Sigmoid colon (tissue), 7 donors: ENCODE measurements at regions of chr16 and their contacts with region 1.

Region 1: GRCh38 chr16:87492721-87493607 is at the start of gene ZCCHC14:
- DNase-seq: peak; percentile 99
- H3K4me3 ChIP-seq: peak within 1 kb of the TSS; percentile 36 to 64 (median 58)
- H3K27ac ChIP-seq: peak within 1 kb of the TSS; percentile 67 to 87 (median 77)
- H3K4me1 ChIP-seq: peaks cover 2 to 41% (median 37%) of the 10 kb centered on the region in 4 donors
- H3K27me3 ChIP-seq: no peaks in the 10 kb centered on the region
- CTCF ChIP-seq: no peak
- EP300 ChIP-seq: no peak
- POLR2A ChIP-seq: no peak
- total RNA-seq, gene ZCCHC14: 11.4 to 23.8 (median 15.2) TPM

Region 2: GRCh38 chr16:87316923-87317749 is 175.8 kb before region 1 on chr16 and contains the start of gene C16orf95:
- intact Hi-C with region 1: loop called (anchors 5 kb)
- DNase-seq: peak; percentile 98
- H3K4me3 ChIP-seq: peak within 1 kb of the TSS; percentile 64 to 99 (median 90)
- H3K27ac ChIP-seq: peak within 1 kb of the TSS; percentile 92 to 98 (median 96)
- H3K4me1 ChIP-seq: peaks cover 0 to 12% (median 9%) of the 10 kb centered on the region in 4 donors
- H3K27me3 ChIP-seq: no peaks in the 10 kb centered on the region
- CTCF ChIP-seq: peak; percentile 56 to 70 (median 61)
- EP300 ChIP-seq: no peak
- POLR2A ChIP-seq: peak; percentile 96 to 97
- total RNA-seq, gene C16orf95: 0.36 to 1.9 (median 1.2) TPM in 3 of 4 donors, not detected in the other

Region 3: GRCh38 chr16:87387942-87388817 is 104.8 kb before region 1 on chr16:
- intact Hi-C with region 1: loop called (anchors 5 kb)
- DNase-seq: peak; percentile 98
- H3K4me3 ChIP-seq: peak overlapping the region in 2 of 4 donors; percentile 13 to 18
- H3K27ac ChIP-seq: peak overlapping the region; percentile 88 to 100 (median 95)
- H3K4me1 ChIP-seq: peaks cover 0 to 44% (median 36%) of the 10 kb centered on the region in 4 donors
- H3K27me3 ChIP-seq: no peaks in the 10 kb centered on the region
- CTCF ChIP-seq: no peak
- EP300 ChIP-seq: peak in 3 of 4 donors; percentile 65 to 81 (median 69)
- POLR2A ChIP-seq: peak; percentile 9 to 44

Region 4: DNA sequence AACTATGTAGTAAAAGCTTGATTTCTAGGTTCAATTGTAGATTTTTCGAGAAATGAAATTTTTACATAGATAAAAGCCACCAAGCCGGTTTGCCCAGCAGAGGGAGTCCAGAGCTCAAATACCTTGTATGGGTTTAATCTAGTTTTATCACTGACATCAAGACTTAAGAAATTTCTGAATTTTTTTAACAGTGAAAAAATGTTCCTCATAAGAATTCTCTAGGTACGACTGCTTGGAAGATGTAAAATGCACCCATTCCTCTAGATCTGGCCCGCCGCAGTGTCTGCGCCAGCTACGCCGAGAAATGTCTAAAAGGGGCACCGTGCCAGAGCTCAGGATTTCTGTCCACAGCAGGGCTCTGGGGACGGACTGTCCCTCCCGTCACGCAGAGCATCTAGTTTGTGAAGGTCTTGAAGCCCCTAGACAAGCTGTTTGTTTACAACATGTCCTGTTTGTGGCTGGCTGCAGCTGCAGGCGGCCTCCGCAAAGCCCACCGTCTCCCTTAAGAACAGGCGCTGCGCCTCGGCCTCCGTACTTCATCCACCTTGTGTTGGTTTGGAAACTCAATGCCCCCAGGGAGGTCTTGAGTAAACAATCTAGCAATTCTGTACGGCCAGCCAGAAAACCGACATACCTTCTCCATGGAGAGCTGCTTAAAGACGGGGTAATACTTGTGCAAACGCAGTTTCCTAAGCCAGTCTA is 76.0 kb before region 1 on chr16:
- intact Hi-C with region 1: loop called (anchors 5 kb)
- DNase-seq: peak; percentile 69
- H3K4me3 ChIP-seq: no peak overlapping the region
- H3K27ac ChIP-seq: no peak overlapping the region
- H3K4me1 ChIP-seq: no peaks in the 10 kb centered on the region
- H3K27me3 ChIP-seq: no peaks in the 10 kb centered on the region
- CTCF ChIP-seq: peak; percentile 10 to 54 (median 40)
- EP300 ChIP-seq: no peak
- POLR2A ChIP-seq: no peak

Region 5: GRCh38 chr16:87447323-87447722 is 45.6 kb before region 1 on chr16:
- intact Hi-C with region 1: loop called (anchors 5 kb)
- DNase-seq: no peak
- H3K4me3 ChIP-seq: no peak overlapping the region
- H3K27ac ChIP-seq: peak overlapping the region; percentile 58 to 82 (median 76)
- H3K4me1 ChIP-seq: peaks cover 0 to 18% (median 14%) of the 10 kb centered on the region in 4 donors
- H3K27me3 ChIP-seq: no peaks in the 10 kb centered on the region
- CTCF ChIP-seq: no peak
- EP300 ChIP-seq: no peak
- POLR2A ChIP-seq: no peak

Region 6: GRCh38 chr16:87461466-87461991 is 31.4 kb before region 1 on chr16:
- intact Hi-C with region 1: loop called (anchors 2 kb)
- DNase-seq: peak; percentile 81
- H3K4me3 ChIP-seq: no peak overlapping the region
- H3K27ac ChIP-seq: peak overlapping the region in 3 of 4 donors; percentile 25 to 43 (median 30)
- H3K4me1 ChIP-seq: peaks cover 0 to 63% (median 55%) of the 10 kb centered on the region in 4 donors
- H3K27me3 ChIP-seq: no peaks in the 10 kb centered on the region
- CTCF ChIP-seq: peak in 1 of 4 experiments; percentile 28
- EP300 ChIP-seq: no peak
- POLR2A ChIP-seq: no peak

Region 7: GRCh38 chr16:87538594-87538993 is 45.6 kb after region 1 on chr16:
- intact Hi-C with region 1: no loop called
- DNase-seq: no peak
- H3K4me3 ChIP-seq: no peak overlapping the region
- H3K27ac ChIP-seq: peak overlapping the region in 1 of 4 donors; percentile 2
- H3K4me1 ChIP-seq: peaks cover 0 to 26% (median 13%) of the 10 kb centered on the region in 4 donors
- H3K27me3 ChIP-seq: peaks cover 4 to 6% (median 4%) of the 10 kb centered on the region in 3 donors
- CTCF ChIP-seq: no peak
- EP300 ChIP-seq: no peak
- POLR2A ChIP-seq: no peak